Posterior cingulate gyrus (tissue), 11 donors: ENCODE measurements at regions of chr19 and their contacts with region 1.

Region 1: GRCh38 chr19:11137542-11138384 is 17.8 kb downstream of the SPC24 start:
- DNase-seq: peak; percentile 69 to 96 (median 79)

Region 2: GRCh38 chr19:10812902-10813404 is 324.8 kb before region 1 on chr19:
- intact Hi-C with region 1: no loop called
- DNase-seq: peak in 2 of 10 donors; percentile 33 to 90

Region 3: GRCh38 chr19:10946964-10947657 is 190.7 kb before region 1 on chr19:
- intact Hi-C with region 1: loop called (anchors 10 kb)
- DNase-seq: no peak

Region 4: GRCh38 chr19:11203194-11204075 is 65.7 kb after region 1 on chr19:
- intact Hi-C with region 1: loop called (anchors 1 kb)
- DNase-seq: peak in 9 of 10 donors; percentile 47 to 92 (median 65)